Ascending aorta (tissue), 2 donors: ENCODE measurements at regions of chr2 and their contacts with region 1.

Region 1: DNA sequence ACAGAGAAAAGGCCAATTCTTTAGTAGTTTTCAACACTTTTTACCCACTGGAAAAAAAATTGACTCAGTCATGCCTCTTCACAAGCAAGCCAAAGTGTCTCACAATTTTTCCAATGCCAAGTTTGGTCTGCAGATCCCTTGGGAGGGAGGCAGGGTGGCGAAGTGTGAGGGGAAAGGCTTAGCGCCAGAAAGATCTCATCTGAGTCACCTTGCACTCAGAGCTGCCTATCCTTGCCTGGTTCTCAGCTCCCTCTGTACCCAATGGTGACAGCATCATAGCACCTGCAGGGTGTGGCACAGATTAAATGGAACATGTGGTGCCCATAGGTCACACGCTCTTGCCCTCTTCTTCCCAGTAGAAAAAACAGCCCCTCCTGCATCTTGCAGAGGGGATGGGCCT is 55.2 kb upstream of the GYPC start:
- DNase-seq: no peak
- H3K4me3 ChIP-seq: no peak overlapping the region
- H3K27ac ChIP-seq: no peak overlapping the region
- H3K4me1 ChIP-seq: peaks cover 0 to 5% of the 10 kb centered on the region in 2 donors
- H3K27me3 ChIP-seq: no peaks in the 10 kb centered on the region
- CTCF ChIP-seq: no peak

Region 2: DNA sequence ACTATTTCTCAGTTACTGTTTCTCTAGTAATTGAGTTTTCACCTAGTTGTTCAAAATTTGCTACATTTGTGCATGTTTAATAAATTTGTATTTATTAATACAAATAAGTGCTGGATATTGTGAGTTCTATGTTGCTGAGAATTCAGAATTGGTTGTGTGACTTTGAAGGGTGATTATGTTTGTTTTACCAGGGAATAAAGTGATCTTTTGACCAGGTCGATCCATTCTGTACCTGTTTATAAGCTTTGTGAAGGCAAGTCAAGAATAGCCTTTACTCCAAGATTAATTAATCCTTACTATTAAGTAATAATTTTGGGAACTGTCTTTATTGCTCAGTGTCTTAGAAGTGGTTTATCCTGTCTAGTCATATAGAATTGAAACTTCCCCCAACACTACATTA is 174.8 kb before region 1 on chr2:
- intact Hi-C with region 1: no loop called
- DNase-seq: no peak
- H3K4me3 ChIP-seq: no peak overlapping the region
- H3K27ac ChIP-seq: no peak overlapping the region
- H3K4me1 ChIP-seq: no peaks in the 10 kb centered on the region
- H3K27me3 ChIP-seq: no peaks in the 10 kb centered on the region
- CTCF ChIP-seq: no peak

Region 3: GRCh38 chr2:126657636-126658318 is 57.0 kb after region 1 on chr2:
- intact Hi-C with region 1: loop called (anchors 5 kb)
- DNase-seq: peak; percentile 68 to 95
- H3K4me3 ChIP-seq: peak overlapping the region; percentile 79 to 90
- H3K27ac ChIP-seq: peak overlapping the region; percentile 98 to 99
- H3K4me1 ChIP-seq: peaks cover 20 to 53% of the 10 kb centered on the region in 2 donors
- H3K27me3 ChIP-seq: no peaks in the 10 kb centered on the region
- CTCF ChIP-seq: peak in 1 of 3 experiments; percentile 4